ENCODE measurements at regions of chr16 and their contacts with region 1.

Region 1: GRCh38 chr16:49884033-49885015 is 28.4 kb upstream of the ZNF423 start:
- DNase-seq: no peak
- H3K4me3 ChIP-seq: no peak overlapping the region
- H3K27ac ChIP-seq: no peak overlapping the region
- H3K4me1 ChIP-seq: no peaks in the 10 kb centered on the region
- H3K27me3 ChIP-seq: peaks cover 0 to 38% of the 10 kb centered on the region in 2 donors
- CTCF ChIP-seq: no peak

Region 2: GRCh38 chr16:49485663-49486062 is 398.7 kb before region 1 on chr16:
- intact Hi-C with region 1: loop called (anchors 2 kb)
- DNase-seq: peak; percentile 11 to 20
- H3K4me3 ChIP-seq: no peak overlapping the region
- H3K27ac ChIP-seq: no peak overlapping the region
- H3K4me1 ChIP-seq: peaks cover 0 to 11% (median 8%) of the 10 kb centered on the region in 4 donors
- H3K27me3 ChIP-seq: peaks cover 0 to 3% of the 10 kb centered on the region in 2 donors
- CTCF ChIP-seq: no peak

Region 3: GRCh38 chr16:49980166-49980565 is 95.8 kb after region 1 on chr16:
- intact Hi-C with region 1: no loop called
- DNase-seq: no peak
- H3K4me3 ChIP-seq: no peak overlapping the region
- H3K27ac ChIP-seq: no peak overlapping the region
- H3K4me1 ChIP-seq: no peaks in the 10 kb centered on the region
- H3K27me3 ChIP-seq: peaks cover 0 to 5% of the 10 kb centered on the region in 2 donors
- CTCF ChIP-seq: no peak

Measured in tibial artery (tissue), 4 donors.